Activated CD8-positive, alpha-beta T cell treated with anti-CD3 and anti-CD28 coated beads for 36 hours (primary cell): ENCODE measurements at regions of chr1 and their contacts with region 1.

Region 1: GRCh38 chr1:3453203-3453761 is 1.2 kb upstream of the ARHGEF16 start:
- DNase-seq: peak; percentile 82
- ATAC-seq: peak; percentile 95
- H3K4me3 Mint-ChIP-seq: no peak overlapping the region
- H3K27ac Mint-ChIP-seq: no peak overlapping the region
- H3K4me1 Mint-ChIP-seq: no peaks in the 10 kb centered on the region
- H3K27me3 Mint-ChIP-seq: peaks cover 16% of the 10 kb centered on the region
- CTCF ChIP-seq: peak; percentile 89

Region 2: DNA sequence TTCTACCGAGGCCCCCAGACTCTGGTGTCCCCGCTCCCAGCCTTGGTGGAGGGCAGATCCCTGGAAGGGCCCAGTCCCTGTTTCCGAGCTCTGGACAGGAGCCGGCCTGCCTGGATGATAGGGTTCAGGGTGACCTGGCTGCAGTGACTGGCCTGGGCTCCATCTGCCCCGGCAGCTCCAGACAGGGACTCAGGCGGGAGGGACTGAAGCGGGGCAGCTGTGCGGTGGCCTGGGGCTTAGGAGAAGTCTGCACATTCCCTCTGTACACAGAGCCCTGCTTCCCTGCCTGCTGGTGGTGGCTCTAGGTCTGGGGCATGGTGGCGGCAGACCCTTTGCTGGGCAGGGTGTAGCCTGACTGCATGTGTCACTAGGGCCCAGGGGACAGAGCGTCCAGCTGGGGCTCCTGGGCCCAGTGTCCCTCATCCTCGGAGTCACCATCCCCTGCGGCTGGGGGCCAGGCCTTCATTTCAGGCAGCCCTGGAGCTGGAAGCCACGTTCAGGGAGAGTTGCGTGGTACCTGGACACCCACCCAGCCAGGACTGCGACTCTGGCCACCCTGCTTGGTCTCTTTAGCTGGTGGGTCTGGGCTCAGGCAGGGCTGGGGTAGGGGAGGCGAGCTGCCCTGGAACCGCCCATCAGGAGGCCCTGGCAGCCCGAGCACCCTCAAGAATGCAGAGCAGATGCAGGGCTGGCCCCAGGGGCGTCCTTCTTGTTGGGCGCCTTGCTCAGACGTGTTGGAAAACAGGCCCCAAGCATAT is 10.8 kb after region 1 on chr1:
- CTCF ChIA-PET with region 1: interaction called, 15 read pairs
- POLR2A ChIA-PET with region 1: no interaction called
- intact Hi-C with region 1: no loop called
- DNase-seq: no peak
- ATAC-seq: no peak
- H3K4me3 Mint-ChIP-seq: no peak overlapping the region
- H3K27ac Mint-ChIP-seq: no peak overlapping the region
- H3K4me1 Mint-ChIP-seq: no peaks in the 10 kb centered on the region
- H3K27me3 Mint-ChIP-seq: no peaks in the 10 kb centered on the region
- CTCF ChIP-seq: no peak

Region 3: DNA sequence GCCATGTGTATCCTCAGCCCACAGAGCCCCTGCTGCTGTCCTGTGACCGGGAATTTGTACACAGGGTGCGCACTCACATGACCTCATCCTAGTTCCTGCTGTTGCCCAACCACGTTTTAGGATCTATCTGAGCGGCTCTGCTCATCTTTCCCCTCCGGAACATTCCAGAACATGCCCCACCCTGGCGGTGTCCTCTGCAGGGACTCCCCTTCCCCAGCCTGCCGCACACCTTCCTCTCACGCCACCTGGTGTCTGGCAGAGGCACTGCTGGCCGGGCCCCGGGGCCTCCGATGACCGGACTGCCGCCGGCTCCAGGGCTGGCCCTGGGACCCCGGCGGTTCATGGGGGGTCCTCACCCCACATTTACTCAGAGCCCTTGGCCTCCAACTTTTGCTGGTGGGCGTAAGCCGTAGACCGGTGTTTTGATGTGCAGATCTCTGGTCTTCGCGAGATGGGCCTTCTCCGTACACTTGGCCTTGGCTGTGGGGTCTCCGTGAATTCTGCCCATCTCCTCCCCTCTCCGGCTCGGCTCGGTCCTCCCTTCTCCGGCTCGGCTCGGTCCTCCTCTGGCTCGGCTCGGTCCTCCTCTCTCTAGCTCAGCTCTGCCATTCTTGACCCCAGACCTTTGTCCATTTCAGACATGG is 30.6 kb after region 1 on chr1:
- CTCF ChIA-PET with region 1: interaction called, 30 read pairs
- POLR2A ChIA-PET with region 1: interaction called, 3 read pairs
- intact Hi-C with region 1: loop called (anchors 2 kb)
- DNase-seq: peak; percentile 58
- ATAC-seq: peak; percentile 73
- H3K4me3 Mint-ChIP-seq: no peak overlapping the region
- H3K27ac Mint-ChIP-seq: no peak overlapping the region
- H3K4me1 Mint-ChIP-seq: no peaks in the 10 kb centered on the region
- H3K27me3 Mint-ChIP-seq: peaks cover 1% of the 10 kb centered on the region
- CTCF ChIP-seq: peak; percentile 92

Region 4: DNA sequence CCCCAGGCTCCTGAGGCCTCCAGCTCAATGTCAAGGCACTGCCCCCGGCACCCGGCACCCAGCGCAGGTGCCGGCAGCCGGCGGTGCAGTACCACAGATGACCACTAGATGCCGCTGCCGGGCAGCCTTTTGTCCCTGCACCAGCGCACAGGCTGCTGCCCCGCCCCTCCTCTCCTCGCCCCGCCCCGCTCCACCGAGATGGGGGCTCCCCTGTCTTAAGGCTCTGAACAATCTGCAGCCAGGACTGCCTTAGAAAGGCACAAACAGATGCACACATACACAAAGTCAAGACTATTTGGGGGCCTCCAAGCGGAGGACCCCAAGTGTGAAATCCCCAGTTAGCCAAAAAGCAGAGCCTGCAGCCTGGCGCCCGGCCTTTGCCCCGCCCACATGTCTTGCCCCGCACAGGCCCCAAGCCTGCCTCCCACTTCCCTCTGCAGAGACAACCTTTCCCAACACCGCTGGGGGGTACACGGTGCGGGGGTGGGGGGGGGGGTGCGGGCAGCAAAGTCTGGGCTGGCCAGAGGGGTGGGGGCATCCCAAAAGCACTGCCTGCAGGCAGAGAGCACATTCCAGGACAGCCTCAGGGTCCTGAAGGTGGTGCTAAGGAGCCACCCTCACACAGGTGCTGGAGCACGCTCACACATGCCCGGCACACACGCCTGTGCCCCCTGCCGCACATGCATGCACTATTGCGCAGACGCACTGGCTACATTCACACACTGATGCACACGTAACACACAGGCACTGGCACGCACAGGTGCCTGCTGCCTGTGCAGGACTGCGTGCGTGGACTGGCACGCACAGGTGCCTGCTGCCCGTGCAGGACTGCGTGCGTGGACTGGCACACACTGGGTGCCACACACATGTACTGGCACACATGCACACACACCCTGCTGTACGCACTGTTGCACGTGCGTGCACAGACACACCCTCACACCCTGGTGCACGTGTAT is 38.3 kb after region 1 on chr1:
- CTCF ChIA-PET with region 1: interaction called, 30 read pairs
- POLR2A ChIA-PET with region 1: no interaction called
- intact Hi-C with region 1: no loop called
- DNase-seq: peak; percentile 91
- ATAC-seq: peak; percentile 98
- H3K4me3 Mint-ChIP-seq: peak overlapping the region; percentile 43
- H3K27ac Mint-ChIP-seq: no peak overlapping the region
- H3K4me1 Mint-ChIP-seq: peaks cover 3% of the 10 kb centered on the region
- H3K27me3 Mint-ChIP-seq: no peaks in the 10 kb centered on the region
- CTCF ChIP-seq: peak; percentile 99

Region 5: GRCh38 chr1:3501856-3502665 is 48.8 kb after region 1 on chr1:
- CTCF ChIA-PET with region 1: no interaction called
- POLR2A ChIA-PET with region 1: no interaction called
- intact Hi-C with region 1: no loop called
- DNase-seq: peak; percentile 27
- ATAC-seq: peak; percentile 49
- H3K4me3 Mint-ChIP-seq: no peak overlapping the region
- H3K27ac Mint-ChIP-seq: no peak overlapping the region
- H3K4me1 Mint-ChIP-seq: no peaks in the 10 kb centered on the region
- H3K27me3 Mint-ChIP-seq: no peaks in the 10 kb centered on the region
- CTCF ChIP-seq: no peak

Region 6: GRCh38 chr1:3518256-3518655 is 65.0 kb after region 1 on chr1:
- CTCF ChIA-PET with region 1: interaction called, 10 read pairs
- POLR2A ChIA-PET with region 1: no interaction called
- intact Hi-C with region 1: no loop called
- DNase-seq: peak; percentile 56
- ATAC-seq: peak; percentile 20
- H3K4me3 Mint-ChIP-seq: no peak overlapping the region
- H3K27ac Mint-ChIP-seq: no peak overlapping the region
- H3K4me1 Mint-ChIP-seq: no peaks in the 10 kb centered on the region
- H3K27me3 Mint-ChIP-seq: no peaks in the 10 kb centered on the region
- CTCF ChIP-seq: peak; percentile 75

Region 7: GRCh38 chr1:3618881-3619671 is 165.8 kb after region 1 on chr1:
- CTCF ChIA-PET with region 1: interaction called, 21 read pairs
- POLR2A ChIA-PET with region 1: no interaction called
- intact Hi-C with region 1: no loop called
- DNase-seq: peak; percentile 88
- ATAC-seq: peak; percentile 94
- H3K4me3 Mint-ChIP-seq: peak overlapping the region; percentile 31
- H3K27ac Mint-ChIP-seq: peak overlapping the region; percentile 6
- H3K4me1 Mint-ChIP-seq: peaks cover 23% of the 10 kb centered on the region
- H3K27me3 Mint-ChIP-seq: no peaks in the 10 kb centered on the region
- CTCF ChIP-seq: peak; percentile 92